Activated CD4-positive, alpha-beta T cell treated with anti-CD3 and anti-CD28 coated beads for 36 hours (primary cell): ENCODE measurements at regions of chr16 and their contacts with region 1.

Region 1: DNA sequence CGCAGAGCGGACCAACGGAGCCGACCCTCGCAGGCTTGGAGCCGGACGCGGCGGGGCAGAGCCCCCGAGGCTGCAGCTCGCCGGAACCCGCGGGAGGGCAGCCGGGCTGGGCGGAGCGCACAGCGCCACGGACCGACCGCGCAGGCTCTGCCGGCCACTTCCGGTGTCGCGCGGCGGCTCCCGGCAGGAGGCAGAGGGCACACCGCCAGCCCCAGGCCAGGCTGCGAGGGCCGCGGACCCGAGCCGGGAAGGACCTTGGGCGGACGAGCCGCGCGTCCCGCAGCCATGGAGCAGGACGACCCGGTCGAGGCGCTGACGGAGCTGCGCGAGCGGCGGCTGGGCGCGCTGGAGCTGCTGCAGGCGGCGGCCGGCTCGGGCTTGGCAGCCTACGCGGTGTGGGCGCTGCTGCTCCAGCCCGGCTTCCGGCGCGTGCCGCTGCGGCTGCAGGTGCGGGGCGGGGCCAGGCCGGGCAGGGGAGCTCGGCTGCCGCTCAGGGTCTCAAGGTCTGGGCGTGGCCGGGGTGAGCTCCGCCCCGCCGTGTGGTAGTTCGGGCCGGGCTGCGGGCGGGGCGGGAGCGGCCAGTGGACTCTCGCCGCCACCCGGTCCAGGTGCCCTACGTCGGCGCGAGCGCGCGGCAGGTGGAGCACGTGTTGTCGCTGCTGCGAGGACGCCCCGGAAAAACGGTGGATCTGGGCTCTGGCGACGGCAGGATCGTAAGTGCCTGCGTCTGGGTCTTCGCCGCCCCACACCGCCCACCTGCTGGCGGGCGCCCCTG is at the start of gene ANTKMT:
- DNase-seq: peak; percentile 86
- ATAC-seq: peak; percentile 72
- H3K4me3 Mint-ChIP-seq: peak within 1 kb of the TSS; percentile 76
- H3K27ac Mint-ChIP-seq: peak within 1 kb of the TSS; percentile 78
- H3K4me1 Mint-ChIP-seq: peaks cover 16% of the 10 kb centered on the region
- H3K27me3 Mint-ChIP-seq: peaks cover 3% of the 10 kb centered on the region
- total RNA-seq, gene ANTKMT: 13.3 to 27.0 TPM

Region 2: DNA sequence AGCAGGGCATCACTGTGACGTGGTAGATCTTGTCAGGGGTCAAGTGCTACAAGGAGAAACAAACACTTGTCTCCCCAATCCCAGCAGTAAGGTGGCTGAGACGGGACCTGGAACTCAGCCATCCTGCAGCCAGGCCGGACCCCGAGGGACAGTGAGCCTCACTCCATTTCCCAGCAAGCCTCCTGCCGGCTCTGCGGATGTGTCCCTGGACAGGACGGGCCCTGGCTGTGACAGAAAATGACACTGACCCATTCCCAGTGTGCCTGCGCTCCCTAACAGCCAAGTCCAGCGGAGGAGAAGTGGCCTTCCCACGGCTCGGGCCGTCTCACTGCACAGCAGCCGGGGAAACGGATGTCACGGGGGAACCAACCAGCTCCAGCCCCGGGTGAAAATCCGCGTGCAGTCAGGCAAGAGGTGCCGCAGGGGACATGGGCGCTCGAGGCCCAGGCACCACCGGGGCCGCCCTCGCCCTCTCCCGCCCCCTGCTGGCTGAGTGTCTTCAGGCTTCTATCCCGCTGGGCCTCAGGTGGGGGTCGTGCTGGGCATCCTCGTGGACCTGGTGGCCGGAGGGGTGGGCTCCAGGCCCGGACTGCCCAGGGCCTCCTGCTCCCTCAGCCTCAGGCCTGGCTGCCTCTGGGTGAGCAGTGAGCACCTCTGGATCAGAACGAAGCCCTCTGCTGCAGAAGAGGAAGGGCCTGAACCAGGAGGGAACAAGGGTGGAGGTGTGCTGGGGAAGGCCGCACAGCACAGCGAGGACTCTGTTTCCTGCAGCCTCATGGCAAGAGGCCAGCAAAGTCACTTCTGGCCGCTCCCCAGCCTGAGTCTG is 12.4 kb after region 1 on chr16:
- CTCF ChIA-PET with region 1: interaction called, 15 read pairs
- POLR2A ChIA-PET with region 1: no interaction called
- intact Hi-C with region 1: loop called in 1 of 2 experiments (anchors 1 kb)
- DNase-seq: peak; percentile 57
- ATAC-seq: no peak
- H3K4me3 Mint-ChIP-seq: no peak overlapping the region
- H3K27ac Mint-ChIP-seq: no peak overlapping the region
- H3K4me1 Mint-ChIP-seq: peaks cover 20% of the 10 kb centered on the region
- H3K27me3 Mint-ChIP-seq: no peaks in the 10 kb centered on the region

Region 3: GRCh38 chr16:740764-741505 is 19.8 kb after region 1 on chr16 and contains the start of gene CIAO3:
- CTCF ChIA-PET with region 1: interaction called, 15 read pairs
- POLR2A ChIA-PET with region 1: no interaction called
- intact Hi-C with region 1: loop called (anchors 1 to 2 kb)
- DNase-seq: peak; percentile 96
- ATAC-seq: peak; percentile 72
- H3K4me3 Mint-ChIP-seq: peak within 1 kb of the TSS; percentile 76
- H3K27ac Mint-ChIP-seq: peak within 1 kb of the TSS; percentile 51
- H3K4me1 Mint-ChIP-seq: peaks cover 22% of the 10 kb centered on the region
- H3K27me3 Mint-ChIP-seq: no peaks in the 10 kb centered on the region
- total RNA-seq, gene CIAO3: 28.3 to 31.9 TPM

Region 4: GRCh38 chr16:760545-761343 is 39.6 kb after region 1 on chr16 and contains the start of gene MSLN:
- CTCF ChIA-PET with region 1: no interaction called
- POLR2A ChIA-PET with region 1: no interaction called
- intact Hi-C with region 1: no loop called
- DNase-seq: no peak
- ATAC-seq: no peak
- H3K4me3 Mint-ChIP-seq: no peak within 1 kb of the TSS
- H3K27ac Mint-ChIP-seq: no peak within 1 kb of the TSS
- H3K4me1 Mint-ChIP-seq: no peaks in the 10 kb centered on the region
- H3K27me3 Mint-ChIP-seq: peaks cover 7% of the 10 kb centered on the region
- total RNA-seq, gene MSLN: not detected

Region 5: GRCh38 chr16:825341-826061 is 104.3 kb after region 1 on chr16:
- CTCF ChIA-PET with region 1: no interaction called
- POLR2A ChIA-PET with region 1: no interaction called
- intact Hi-C with region 1: no loop called
- DNase-seq: no peak
- ATAC-seq: no peak
- H3K4me3 Mint-ChIP-seq: no peak overlapping the region
- H3K27ac Mint-ChIP-seq: no peak overlapping the region
- H3K4me1 Mint-ChIP-seq: peaks cover 3% of the 10 kb centered on the region
- H3K27me3 Mint-ChIP-seq: peaks cover 8% of the 10 kb centered on the region